ENCODE measurements at regions of chr2 and their contacts with region 1.

Region 1: GRCh38 chr2:74529357-74530238 is at the starts of genes AUP1 and HTRA2:
- DNase-seq: peak; percentile 69 to 94 (median 80)
- ATAC-seq: peak; percentile 90
- H3K4me3 ChIP-seq: peak within 1 kb of the TSS; percentile 84
- H3K4me3 Mint-ChIP-seq: peak within 1 kb of the TSS; percentile 92
- H3K27ac ChIP-seq: peak within 1 kb of the TSS; percentile 79 to 86
- H3K27ac Mint-ChIP-seq: peak within 1 kb of the TSS; percentile 89
- H3K4me1 ChIP-seq: peaks cover 35% of the 10 kb centered on the region
- H3K4me1 Mint-ChIP-seq: peaks cover 42% of the 10 kb centered on the region
- H3K27me3 ChIP-seq: no peaks in the 10 kb centered on the region
- H3K27me3 Mint-ChIP-seq: no peaks in the 10 kb centered on the region
- CTCF ChIP-seq: no peak
- total RNA-seq, gene AUP1: 162 to 170 TPM
- total RNA-seq, gene HTRA2: 15.3 to 16.0 TPM

Region 2: GRCh38 chr2:74250189-74250631 is 279.4 kb before region 1 on chr2:
- CTCF ChIA-PET with region 1: interaction called, 9 read pairs
- POLR2A ChIA-PET with region 1: interaction called, 3 read pairs
- intact Hi-C with region 1: loop called in 1 of 2 experiments (anchors 1 kb)
- DNase-seq: peak; percentile 27 to 79 (median 46)
- ATAC-seq: peak; percentile 56
- H3K4me3 ChIP-seq: no peak overlapping the region
- H3K4me3 Mint-ChIP-seq: no peak overlapping the region
- H3K27ac ChIP-seq: no peak overlapping the region
- H3K27ac Mint-ChIP-seq: no peak overlapping the region
- H3K4me1 ChIP-seq: peaks cover 5% of the 10 kb centered on the region
- H3K4me1 Mint-ChIP-seq: no peaks in the 10 kb centered on the region
- H3K27me3 ChIP-seq: no peaks in the 10 kb centered on the region
- H3K27me3 Mint-ChIP-seq: no peaks in the 10 kb centered on the region
- CTCF ChIP-seq: peak; percentile 84

Region 3: DNA sequence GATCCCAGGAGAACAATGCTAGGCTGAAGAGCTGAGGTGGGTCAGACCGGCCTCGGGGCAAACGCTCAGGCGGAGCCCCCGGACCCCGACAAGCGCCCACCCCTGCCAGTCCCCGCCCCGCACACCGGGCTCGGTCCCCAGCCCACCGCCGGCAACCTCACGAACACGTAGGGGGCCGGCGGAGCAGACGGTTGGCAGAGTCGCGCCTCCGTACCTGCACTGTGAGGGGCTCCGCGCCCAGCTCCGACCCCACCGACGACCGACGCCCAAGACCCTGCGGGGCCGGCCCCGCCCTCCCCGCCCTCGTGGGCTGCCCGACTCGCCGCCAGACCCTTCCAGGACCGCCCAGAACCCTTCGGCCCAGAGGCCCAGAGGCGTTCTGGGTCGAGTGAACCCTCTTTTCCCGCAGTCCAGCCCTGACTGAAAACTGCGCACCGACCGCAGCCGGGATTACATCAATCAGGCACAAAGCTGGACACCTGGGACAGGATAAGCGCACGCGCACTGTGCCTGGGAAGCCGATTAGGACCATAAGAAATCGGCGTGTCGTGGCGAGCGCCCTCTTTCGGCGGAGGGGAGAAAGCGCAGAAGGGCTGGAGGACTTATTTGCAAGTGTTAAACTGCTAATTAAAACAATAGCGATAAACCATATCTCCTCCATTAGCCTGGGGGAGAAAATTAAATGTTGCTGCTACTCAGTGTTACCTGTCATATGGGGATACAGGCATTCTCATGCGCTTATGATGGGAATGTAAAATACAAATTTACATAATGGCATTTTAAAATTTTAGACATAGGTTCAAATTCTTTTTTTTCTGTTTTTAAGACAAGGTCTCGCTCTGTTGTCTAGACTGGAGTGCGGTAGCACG is 137.8 kb before region 1 on chr2:
- CTCF ChIA-PET with region 1: no interaction called
- POLR2A ChIA-PET with region 1: interaction called, 10 read pairs
- intact Hi-C with region 1: loop called (anchors 2 to 10 kb)
- DNase-seq: peak; percentile 92 to 98 (median 96)
- ATAC-seq: peak; percentile 90
- H3K4me3 ChIP-seq: peak overlapping the region; percentile 72
- H3K4me3 Mint-ChIP-seq: peak overlapping the region; percentile 99
- H3K27ac ChIP-seq: peak overlapping the region; percentile 88 to 92
- H3K27ac Mint-ChIP-seq: no peak overlapping the region
- H3K4me1 ChIP-seq: peaks cover 34% of the 10 kb centered on the region
- H3K4me1 Mint-ChIP-seq: peaks cover 9% of the 10 kb centered on the region
- H3K27me3 ChIP-seq: peaks cover 0 to 5% of the 10 kb centered on the region in 2 experiments
- H3K27me3 Mint-ChIP-seq: no peaks in the 10 kb centered on the region
- CTCF ChIP-seq: peak; percentile 99

Region 4: DNA sequence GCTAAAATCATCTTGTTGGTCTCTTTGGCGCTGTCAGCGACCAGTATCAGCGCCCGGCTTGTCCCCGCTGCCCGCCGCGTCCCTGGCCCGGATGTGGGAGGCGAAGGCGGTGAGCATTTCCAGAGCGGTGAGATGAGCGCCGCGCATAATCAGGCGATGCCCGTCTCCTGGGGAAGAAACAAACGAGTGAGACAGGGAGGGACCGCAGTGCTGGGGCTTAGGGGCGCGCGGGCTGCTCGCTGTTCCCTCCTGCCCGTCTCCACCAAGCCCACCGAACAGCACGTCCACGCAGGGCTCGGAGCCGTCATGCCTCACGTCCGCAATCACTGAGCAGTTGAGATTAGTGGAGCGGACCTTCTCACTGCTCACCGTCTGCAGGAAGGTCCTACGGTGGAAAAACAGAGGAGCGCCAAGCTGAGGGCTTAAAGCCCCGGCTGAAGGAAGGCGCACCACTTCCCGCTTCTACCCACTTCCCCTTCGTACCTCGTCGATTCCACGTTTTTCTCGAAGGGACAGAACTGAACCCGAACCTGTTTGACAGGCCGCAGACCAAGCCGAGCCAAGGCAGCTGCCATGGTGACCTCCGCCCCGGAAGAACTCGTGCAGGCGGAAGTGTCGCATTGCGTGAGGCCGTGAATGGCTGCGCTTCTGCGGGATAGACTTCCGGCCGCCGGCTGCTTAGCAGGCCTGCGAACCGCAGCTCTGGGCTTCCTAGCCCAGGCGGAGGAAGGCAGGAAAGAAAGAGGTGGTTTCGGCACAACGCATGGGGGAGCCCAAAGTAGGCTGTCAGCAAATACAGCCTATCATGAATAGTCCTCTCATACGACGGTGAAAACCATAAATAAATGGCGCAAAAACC is 57.3 kb before region 1 on chr2 and contains the start of gene MRPL53:
- CTCF ChIA-PET with region 1: no interaction called
- POLR2A ChIA-PET with region 1: interaction called, 20 read pairs
- intact Hi-C with region 1: no loop called
- DNase-seq: peak; percentile 96 to 99 (median 97)
- ATAC-seq: peak; percentile 92
- H3K4me3 ChIP-seq: peak within 1 kb of the TSS; percentile 80
- H3K4me3 Mint-ChIP-seq: peak within 1 kb of the TSS; percentile 95
- H3K27ac ChIP-seq: peak within 1 kb of the TSS; percentile 85 to 91
- H3K27ac Mint-ChIP-seq: peak within 1 kb of the TSS; percentile 96
- H3K4me1 ChIP-seq: peaks cover 30% of the 10 kb centered on the region
- H3K4me1 Mint-ChIP-seq: peaks cover 25% of the 10 kb centered on the region
- H3K27me3 ChIP-seq: no peaks in the 10 kb centered on the region
- H3K27me3 Mint-ChIP-seq: no peaks in the 10 kb centered on the region
- CTCF ChIP-seq: no peak
- total RNA-seq, gene MRPL53: 39.5 to 44.3 TPM

Region 5: DNA sequence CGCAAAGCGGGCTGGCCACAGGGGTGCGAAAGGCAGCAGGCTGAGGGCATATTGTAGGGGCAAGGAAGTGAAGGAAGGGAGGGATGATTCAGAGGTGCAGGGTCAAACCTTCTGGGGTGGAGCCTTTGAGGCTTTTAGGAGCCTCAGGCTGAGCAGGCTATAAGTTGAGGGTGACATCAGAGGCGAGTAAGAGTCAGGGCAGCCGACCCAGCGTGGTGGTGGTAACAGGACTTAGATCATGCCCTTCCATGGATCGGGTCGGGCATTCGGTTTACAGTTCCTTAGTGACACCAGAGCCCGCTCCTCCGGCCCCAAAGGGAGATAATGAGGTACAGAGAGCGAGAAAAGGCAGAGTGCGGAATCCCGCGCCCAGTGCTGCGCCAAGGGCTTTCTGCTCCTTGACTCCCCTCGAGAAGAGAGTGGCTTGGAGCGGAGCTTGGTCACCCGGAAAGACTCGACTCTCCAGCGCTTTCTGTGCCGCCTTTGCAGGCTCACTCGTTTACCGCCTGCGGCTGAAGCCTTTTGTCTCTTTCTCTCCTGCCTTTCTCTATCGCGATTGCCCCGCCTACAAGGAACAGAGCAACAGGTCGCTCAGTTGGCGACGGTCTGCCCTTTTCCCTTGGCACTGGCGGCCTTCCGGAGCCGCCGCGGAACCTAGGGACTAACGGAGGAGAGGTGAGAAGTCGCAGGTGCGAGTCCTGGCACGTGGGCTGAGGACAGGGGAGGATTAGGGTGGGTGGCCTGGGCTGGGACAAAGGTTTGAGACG is 30.9 kb before region 1 on chr2:
- CTCF ChIA-PET with region 1: interaction called, 3 read pairs
- POLR2A ChIA-PET with region 1: interaction called, 10 read pairs
- intact Hi-C with region 1: no loop called
- DNase-seq: peak in 3 of 14 experiments; percentile 34 to 51 (median 41)
- ATAC-seq: peak; percentile 28
- H3K4me3 ChIP-seq: peak overlapping the region; percentile 64
- H3K4me3 Mint-ChIP-seq: peak overlapping the region; percentile 82
- H3K27ac ChIP-seq: no peak overlapping the region
- H3K27ac Mint-ChIP-seq: no peak overlapping the region
- H3K4me1 ChIP-seq: peaks cover 44% of the 10 kb centered on the region
- H3K4me1 Mint-ChIP-seq: peaks cover 53% of the 10 kb centered on the region
- H3K27me3 ChIP-seq: peaks cover 46 to 60% of the 10 kb centered on the region in 2 experiments
- H3K27me3 Mint-ChIP-seq: peaks cover 60% of the 10 kb centered on the region
- CTCF ChIP-seq: no peak

Region 6: GRCh38 chr2:74515981-74516633 is 13.5 kb before region 1 on chr2:
- CTCF ChIA-PET with region 1: interaction called, 4 read pairs
- POLR2A ChIA-PET with region 1: interaction called, 27 read pairs
- intact Hi-C with region 1: loop called in 1 of 2 experiments (anchors 2 kb)
- DNase-seq: peak; percentile 54 to 85 (median 68)
- ATAC-seq: peak; percentile 80
- H3K4me3 ChIP-seq: peak overlapping the region; percentile 54
- H3K4me3 Mint-ChIP-seq: peak overlapping the region; percentile 85
- H3K27ac ChIP-seq: no peak overlapping the region
- H3K27ac Mint-ChIP-seq: no peak overlapping the region
- H3K4me1 ChIP-seq: peaks cover 40% of the 10 kb centered on the region
- H3K4me1 Mint-ChIP-seq: peaks cover 18% of the 10 kb centered on the region
- H3K27me3 ChIP-seq: peaks cover 78 to 84% of the 10 kb centered on the region in 2 experiments
- H3K27me3 Mint-ChIP-seq: peaks cover 92% of the 10 kb centered on the region
- CTCF ChIP-seq: no peak